ENCODE measurements at regions of chr2 and their contacts with region 1.

Region 1: GRCh38 chr2:197705121-197705911 is at the start of gene MARS2:
- DNase-seq: peak; percentile 91 to 93
- H3K4me3 ChIP-seq: peak within 1 kb of the TSS; percentile 81
- H3K4me1 ChIP-seq: peaks cover 9% of the 10 kb centered on the region
- H3K27me3 ChIP-seq: no peaks in the 10 kb centered on the region

Region 2: DNA sequence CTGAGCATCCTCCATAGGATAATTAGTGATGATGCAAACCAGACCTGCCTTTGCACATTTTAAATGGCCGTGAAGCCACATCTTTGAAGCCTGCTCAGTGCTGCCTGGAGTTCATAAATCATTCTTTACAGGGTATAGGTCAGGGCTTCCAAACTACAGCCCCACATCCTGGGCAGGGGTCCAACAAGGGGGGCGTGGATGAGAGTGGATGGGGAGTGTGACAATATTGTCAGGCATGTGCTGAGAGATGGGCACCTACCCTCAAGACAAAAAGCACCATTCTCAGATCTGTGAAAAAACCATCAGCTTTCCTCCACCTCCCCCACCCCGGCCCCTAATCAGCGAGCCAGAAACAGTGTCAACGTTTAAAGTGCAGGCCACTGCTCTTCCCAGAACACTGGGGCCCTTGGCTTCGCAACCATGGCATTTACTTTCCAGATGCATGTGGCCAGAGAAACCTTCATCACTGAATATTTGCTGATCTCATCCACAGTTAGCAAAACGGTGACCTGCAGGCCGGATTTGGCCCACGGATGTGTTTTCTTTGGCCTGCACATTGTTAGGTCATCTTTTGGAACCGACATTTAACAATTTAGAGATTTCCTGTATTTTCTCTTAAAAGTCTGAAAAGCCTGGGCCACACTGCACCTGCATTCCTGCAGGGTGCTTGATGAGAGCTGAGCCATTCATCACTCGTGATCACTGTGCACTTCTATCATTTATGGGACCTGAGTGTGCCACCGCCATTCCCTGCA is 525.4 kb before region 1 on chr2:
- in situ Hi-C with region 1: no loop called
- DNase-seq: no peak
- H3K4me3 ChIP-seq: no peak overlapping the region
- H3K4me1 ChIP-seq: no peaks in the 10 kb centered on the region
- H3K27me3 ChIP-seq: peaks cover 2% of the 10 kb centered on the region; the same call in 1 of the 2 replicates

Region 3: GRCh38 chr2:197434541-197435513 is 270.5 kb before region 1 on chr2 and contains the start of gene SF3B1:
- in situ Hi-C with region 1: loop called (anchors 10 kb)
- DNase-seq: peak; percentile 94 to 99
- H3K4me3 ChIP-seq: peak within 1 kb of the TSS; percentile 98
- H3K4me1 ChIP-seq: peaks cover 15% of the 10 kb centered on the region
- H3K27me3 ChIP-seq: no peaks in the 10 kb centered on the region

Region 4: DNA sequence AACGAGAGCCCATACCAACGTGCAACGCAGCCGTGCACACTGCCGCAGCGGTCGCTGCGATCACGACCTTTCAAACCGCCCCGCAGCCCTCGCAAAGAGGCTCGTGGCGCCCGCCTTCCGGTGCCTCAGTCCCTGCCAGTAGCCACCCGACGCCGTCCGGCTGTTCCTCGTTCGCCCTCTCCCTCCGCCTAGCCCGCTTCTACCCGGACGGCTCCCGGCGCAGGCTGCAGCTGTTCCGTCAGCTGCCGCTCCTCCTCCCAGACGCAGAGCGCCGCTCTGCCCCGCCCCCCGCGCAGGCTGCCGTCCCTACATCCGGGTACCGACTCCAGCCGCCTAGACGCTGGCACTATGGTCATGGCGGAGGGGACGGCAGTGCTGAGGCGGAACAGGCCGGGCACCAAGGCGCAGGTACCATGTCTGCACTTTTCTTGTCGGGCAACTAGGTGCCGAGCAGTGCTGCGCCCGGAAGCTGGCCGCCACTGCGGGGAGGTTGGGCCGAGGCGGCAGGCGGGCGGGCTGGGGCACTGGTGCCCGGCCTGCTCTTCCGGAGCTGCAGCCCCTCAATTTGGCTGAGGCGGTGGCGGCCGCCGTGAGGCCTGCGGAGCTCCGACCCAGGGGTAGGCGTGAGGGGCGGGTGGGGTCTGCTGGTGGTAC is 189.4 kb before region 1 on chr2 and contains the start of gene MOB4:
- in situ Hi-C with region 1: loop called (anchors 10 kb)
- DNase-seq: peak; percentile 88 to 97
- H3K4me3 ChIP-seq: peak within 1 kb of the TSS; percentile 83
- H3K4me1 ChIP-seq: peaks cover 19% of the 10 kb centered on the region
- H3K27me3 ChIP-seq: no peaks in the 10 kb centered on the region

Measured in HAP-1 (cell line).